Head of caudate nucleus (tissue), 42 donors: ENCODE measurements at regions of chr9 and their contacts with region 1.

Region 1: DNA sequence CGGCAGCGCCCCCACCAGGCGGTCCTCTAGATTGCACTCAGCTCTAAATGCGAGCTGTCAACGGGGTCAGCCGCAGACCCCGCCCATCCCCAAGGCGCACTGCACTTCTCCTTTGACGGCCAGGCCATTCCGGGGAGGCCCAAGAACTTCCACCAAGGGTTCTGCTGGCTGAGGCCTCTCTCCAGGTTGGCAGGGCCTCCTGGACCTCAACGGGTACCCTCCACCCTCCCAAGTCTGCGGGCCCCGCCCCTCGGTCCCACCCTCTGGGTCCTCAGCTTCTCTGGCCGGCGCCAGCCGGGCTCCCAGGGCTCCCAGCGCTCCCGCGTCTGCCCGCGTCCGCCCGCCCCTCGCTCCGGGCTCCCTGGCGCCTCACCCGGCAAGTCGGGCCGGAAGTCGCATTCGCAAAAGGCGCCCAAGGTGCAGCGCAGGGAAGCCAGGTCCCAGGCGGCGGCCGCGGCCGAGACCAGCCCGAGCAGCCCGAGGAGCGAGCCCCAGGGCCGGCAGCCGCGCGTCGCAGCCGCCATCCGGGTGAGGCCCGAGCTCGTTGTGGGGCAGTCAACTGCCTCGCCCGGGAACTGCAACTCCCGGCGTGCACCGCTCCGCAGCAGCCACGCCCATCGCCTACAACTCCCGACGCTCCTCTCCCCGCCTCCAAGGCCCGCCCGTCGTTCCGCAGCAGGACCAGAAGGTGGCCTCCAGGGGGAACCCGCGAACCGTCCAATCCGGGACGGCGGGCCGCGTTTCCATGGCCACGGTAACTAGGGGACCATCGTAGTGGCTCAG is at the start of gene TOR2A:
- DNase-seq: peak; percentile 94 to 99 (median 98)

Region 2: GRCh38 chr9:127503947-127504782 is 230.8 kb before region 1 on chr9:
- intact Hi-C with region 1: loop called (anchors 10 kb)
- DNase-seq: peak; percentile 57 to 93 (median 84)

Region 3: GRCh38 chr9:127586537-127586936 is 148.4 kb before region 1 on chr9:
- intact Hi-C with region 1: loop called (anchors 5 kb)
- DNase-seq: peak; percentile 46 to 93 (median 80)

Region 4: GRCh38 chr9:127664667-127665507 is 70.1 kb before region 1 on chr9:
- intact Hi-C with region 1: no loop called
- DNase-seq: no peak

Region 5: DNA sequence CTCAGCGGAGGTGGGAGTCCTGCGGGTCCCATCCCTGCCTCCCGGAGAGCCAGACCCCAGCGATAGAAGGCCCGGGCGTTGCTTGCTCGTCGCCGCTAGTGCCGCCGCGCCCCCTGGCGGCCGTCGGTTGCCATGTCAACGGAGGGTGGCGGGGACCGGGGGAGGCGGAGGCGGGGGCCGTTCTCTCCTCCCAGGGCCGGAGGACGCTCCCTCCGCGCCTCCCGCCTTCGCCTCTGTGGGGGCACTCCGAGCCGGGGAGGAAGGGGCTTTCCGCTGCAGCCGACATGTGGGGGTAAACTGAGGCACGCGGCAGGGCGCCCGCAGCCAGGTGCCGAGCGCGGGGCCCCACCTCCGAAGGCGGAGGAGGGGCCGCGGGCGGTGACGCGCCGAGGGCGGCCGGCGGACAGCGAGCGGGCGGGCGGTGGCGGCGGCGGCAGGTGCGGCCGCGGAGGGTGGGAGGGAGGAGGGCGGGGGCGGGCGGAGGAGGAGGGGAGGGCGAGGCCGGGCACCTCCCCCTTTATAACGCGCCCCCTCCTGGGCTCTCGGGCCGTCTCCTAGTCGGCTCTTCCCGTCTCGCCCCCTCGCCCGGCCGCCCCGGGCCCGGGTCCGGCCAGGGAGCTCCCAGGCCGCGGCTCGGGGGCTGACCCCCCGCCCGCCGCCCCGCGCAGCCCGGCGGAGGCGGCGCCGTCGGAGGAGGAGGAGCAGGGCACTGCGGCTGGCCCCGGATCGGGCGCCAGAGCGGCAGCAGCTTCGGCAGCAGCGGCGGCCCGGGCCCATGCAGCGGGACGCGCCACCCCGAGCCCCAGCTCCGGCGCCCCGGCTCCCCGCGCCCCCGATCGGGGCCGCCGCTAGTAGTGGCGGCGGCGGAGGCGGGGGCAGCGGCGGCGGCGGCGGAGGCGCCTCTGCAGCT is 50.3 kb after region 1 on chr9:
- intact Hi-C with region 1: loop called (anchors 2 kb)
- DNase-seq: peak; percentile 61 to 95 (median 87)

Region 6: DNA sequence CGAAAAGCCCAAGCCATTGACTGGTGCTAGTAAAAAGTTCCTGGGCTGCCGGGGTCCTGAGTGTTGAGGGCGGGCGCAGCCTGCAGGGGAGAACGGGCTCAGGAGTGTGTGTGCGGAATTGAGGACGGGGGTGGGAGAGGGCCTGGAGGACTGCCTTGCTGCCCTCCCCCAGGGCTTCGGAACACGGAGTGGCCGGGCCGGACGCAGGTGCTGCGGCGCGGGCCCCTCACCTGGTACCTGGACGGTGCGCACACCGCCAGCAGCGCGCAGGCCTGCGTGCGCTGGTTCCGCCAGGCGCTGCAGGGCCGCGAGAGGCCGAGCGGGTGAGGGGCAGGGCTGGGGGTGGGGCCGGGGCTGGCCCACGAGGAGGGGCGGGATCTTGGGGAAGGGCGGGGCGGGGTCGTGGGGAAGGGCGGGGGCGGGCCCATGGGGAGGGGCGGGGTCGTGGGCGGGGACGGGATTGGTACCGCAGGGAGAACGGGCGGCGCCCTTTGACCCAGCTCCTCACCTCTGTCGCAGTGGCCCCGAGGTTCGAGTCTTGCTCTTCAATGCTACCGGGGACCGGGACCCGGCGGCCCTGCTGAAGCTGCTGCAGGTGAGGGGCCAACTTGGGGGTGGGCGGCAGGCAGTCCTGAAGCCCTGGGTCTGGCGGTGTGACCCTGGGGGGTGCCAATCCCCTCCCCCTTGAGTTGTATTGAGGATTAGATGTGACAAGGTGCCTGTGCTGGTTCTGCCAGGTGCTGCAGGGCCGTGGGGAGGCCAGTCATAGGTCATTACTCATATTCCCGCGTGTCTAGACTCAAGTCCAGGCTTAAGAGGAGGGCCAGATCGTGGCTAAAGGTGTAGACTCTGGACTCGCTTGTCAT is 74.8 kb after region 1 on chr9:
- intact Hi-C with region 1: no loop called
- DNase-seq: no peak

Region 7: GRCh38 chr9:127869310-127870152 is 134.6 kb after region 1 on chr9:
- intact Hi-C with region 1: loop called (anchors 10 kb)
- DNase-seq: peak; percentile 54 to 92 (median 82)

Region 8: GRCh38 chr9:127916665-127917613 is 182.0 kb after region 1 on chr9 and contains the start of gene ST6GALNAC4:
- intact Hi-C with region 1: loop called (anchors 5 kb)
- DNase-seq: peak; percentile 88 to 98 (median 96)